Activated B cell treated with CpG ODN at 0.5 μM for 24 hours (primary cell): ENCODE measurements at regions of chr10 and their contacts with region 1.

Region 1: GRCh38 chr10:101353692-101354327 is at the start of gene BTRC:
- DNase-seq: peak; percentile 89
- ATAC-seq: peak; percentile 96
- H3K4me3 Mint-ChIP-seq: peak within 1 kb of the TSS; percentile 99
- H3K27ac Mint-ChIP-seq: peak within 1 kb of the TSS; percentile 90
- H3K4me1 Mint-ChIP-seq: peaks cover 24% of the 10 kb centered on the region
- H3K27me3 Mint-ChIP-seq: peaks cover 18% of the 10 kb centered on the region
- CTCF ChIP-seq: no peak
- total RNA-seq, gene BTRC: 11.8 and 19.4 TPM in 2 replicates

Region 2: GRCh38 chr10:100535715-100536353 is 818.0 kb before region 1 on chr10 and contains the start of gene HIF1AN:
- CTCF ChIA-PET with region 1: no interaction called
- POLR2A ChIA-PET with region 1: no interaction called
- intact Hi-C with region 1: loop called (anchors 5 kb)
- DNase-seq: peak; percentile 79
- ATAC-seq: peak; percentile 100
- H3K4me3 Mint-ChIP-seq: no peak within 1 kb of the TSS
- H3K27ac Mint-ChIP-seq: no peak within 1 kb of the TSS
- H3K4me1 Mint-ChIP-seq: peaks cover 14% of the 10 kb centered on the region
- H3K27me3 Mint-ChIP-seq: no peaks in the 10 kb centered on the region
- CTCF ChIP-seq: peak; percentile 3
- total RNA-seq, gene HIF1AN: 55.8 and 59.9 TPM in 2 replicates

Region 3: DNA sequence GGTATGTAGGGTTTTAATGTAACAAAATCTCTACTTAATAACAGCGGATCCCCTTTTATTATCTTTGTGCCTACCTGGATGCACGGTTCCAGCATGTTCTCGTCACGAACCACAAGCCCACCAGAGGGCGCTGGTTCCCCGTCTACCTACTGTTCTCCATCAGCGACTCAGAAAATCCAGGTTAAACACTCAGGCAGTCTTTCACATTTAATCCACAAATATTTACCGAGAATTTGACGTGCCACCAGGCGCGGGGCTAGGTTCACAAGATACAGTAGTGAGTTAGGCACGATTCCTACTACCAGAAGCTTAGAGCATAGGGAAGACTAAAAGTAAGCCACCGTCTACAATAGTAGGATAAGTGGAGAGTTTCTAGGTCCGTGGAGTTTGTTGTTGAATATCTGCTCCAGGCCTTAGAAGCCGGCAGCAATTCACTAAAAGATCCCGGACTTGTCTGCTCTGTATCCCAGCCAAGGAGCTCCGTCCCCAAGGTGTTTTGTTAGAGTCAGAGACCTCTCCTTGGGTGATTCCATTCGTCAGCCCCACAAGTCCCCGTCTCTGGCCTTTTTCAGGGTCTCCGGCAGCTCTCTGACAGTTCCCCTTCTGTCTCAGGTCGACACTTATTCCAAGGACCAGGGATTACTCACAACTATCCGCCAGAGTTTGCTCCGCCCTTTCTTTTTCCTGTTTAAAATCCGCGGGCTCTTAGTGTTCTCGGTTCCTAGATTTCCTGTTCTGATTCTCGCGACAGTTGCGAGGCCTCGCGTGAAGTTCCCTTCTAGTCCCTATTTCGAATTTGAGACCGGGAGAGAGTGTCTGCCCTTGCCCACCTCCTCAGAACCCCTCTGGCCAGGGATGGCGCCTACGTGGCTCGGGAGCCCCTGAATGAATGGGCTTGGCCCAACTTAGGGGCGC is 293.5 kb before region 1 on chr10:
- CTCF ChIA-PET with region 1: no interaction called
- POLR2A ChIA-PET with region 1: no interaction called
- intact Hi-C with region 1: loop called (anchors 5 kb)
- DNase-seq: peak; percentile 79
- ATAC-seq: peak; percentile 65
- H3K4me3 Mint-ChIP-seq: peak overlapping the region; percentile 98
- H3K27ac Mint-ChIP-seq: peak overlapping the region; percentile 95
- H3K4me1 Mint-ChIP-seq: peaks cover 34% of the 10 kb centered on the region
- H3K27me3 Mint-ChIP-seq: peaks cover 6% of the 10 kb centered on the region
- CTCF ChIP-seq: peak; percentile 62

Region 4: DNA sequence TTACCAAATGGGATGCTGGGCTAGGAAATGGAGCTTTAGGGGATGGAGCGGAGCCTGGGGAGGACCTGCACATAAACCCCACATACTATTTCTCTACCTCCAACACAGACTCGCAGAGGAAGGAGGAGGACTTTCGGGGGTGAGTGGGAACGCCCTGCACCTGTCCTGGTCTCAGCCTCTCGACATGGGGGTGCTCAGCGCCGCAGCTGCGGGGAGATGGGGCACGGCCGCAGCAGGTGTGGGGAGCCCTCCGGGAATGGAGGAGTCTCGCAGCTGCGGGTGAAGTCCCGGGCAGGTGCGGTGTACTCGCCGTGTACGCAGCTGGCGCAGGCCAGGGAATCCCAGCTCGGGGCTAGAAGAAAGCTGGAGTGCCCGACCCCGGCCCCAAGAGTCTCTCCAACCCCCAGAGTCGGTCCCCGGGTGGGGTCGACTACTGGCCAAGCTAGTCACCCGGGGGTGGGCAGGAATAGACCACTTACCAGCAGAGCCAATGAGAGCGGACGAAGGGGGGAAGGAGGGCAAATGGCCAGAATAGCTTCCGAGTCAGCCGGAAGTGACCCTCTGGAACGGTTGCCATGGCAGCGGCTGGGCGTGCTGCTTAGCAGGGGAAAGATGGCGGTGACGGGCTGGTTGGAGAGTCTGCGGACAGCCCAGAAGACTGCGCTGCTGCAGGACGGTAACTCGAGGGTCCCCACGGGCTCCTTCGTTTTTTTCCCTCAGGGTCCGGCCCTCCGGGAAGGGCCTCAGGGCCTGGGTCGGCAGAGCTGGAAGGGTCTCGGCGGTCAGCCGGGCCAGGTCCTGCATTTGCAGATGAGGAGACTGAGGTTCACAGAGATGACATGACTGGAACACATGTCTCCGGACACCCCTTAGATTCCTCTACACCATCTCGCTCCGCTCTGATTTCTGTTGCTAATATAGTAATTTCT is 234.2 kb after region 1 on chr10 and contains the starts of genes DPCD and POLL:
- CTCF ChIA-PET with region 1: no interaction called
- POLR2A ChIA-PET with region 1: no interaction called
- intact Hi-C with region 1: loop called (anchors 5 kb)
- DNase-seq: peak; percentile 83
- ATAC-seq: peak; percentile 97
- H3K4me3 Mint-ChIP-seq: peak within 1 kb of the TSS; percentile 92
- H3K27ac Mint-ChIP-seq: peak within 1 kb of the TSS; percentile 80
- H3K4me1 Mint-ChIP-seq: peaks cover 19% of the 10 kb centered on the region
- H3K27me3 Mint-ChIP-seq: no peaks in the 10 kb centered on the region
- CTCF ChIP-seq: no peak
- total RNA-seq, gene DPCD: 2.3 and 2.9 TPM in 2 replicates
- total RNA-seq, gene POLL: 35.0 and 39.5 TPM in 2 replicates

Region 5: DNA sequence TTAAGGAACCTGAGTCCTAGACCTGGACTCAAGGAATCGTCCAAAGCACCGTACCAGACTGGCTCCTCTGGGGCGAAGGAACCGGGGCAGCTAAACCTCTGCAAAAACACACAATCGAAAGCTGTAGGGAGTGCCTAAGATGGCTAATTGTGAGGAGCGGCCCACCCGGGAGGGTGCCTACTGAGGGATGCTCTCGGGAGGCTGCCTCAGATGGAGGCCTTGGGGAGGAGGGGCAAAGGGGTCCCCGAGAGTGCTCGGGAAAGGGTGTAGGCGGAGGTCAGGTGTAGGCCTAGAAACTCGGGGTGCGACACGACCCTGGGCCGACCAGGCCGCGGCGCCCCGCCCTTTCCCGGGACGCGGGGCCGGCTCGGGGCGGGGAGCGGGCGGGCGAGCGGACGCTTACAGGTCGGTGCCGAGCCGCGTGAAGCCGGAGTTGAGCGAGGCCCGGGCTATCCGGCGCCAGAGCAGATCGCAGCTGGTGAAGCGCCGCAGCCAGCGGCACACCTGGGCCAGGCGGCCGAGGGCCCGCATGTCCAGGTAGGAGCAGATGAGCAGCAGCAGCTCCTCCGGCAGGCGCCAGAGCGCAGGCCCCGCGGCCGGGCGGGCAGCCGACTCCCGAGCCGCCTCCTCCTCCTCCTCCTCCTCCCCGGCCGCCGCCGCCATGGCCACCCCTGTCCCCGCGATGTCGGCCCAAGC is 340.3 kb after region 1 on chr10:
- CTCF ChIA-PET with region 1: no interaction called
- POLR2A ChIA-PET with region 1: no interaction called
- intact Hi-C with region 1: loop called (anchors 2 kb)
- DNase-seq: peak; percentile 76
- ATAC-seq: peak; percentile 68
- H3K4me3 Mint-ChIP-seq: peak overlapping the region; percentile 97
- H3K27ac Mint-ChIP-seq: peak overlapping the region; percentile 98
- H3K4me1 Mint-ChIP-seq: peaks cover 49% of the 10 kb centered on the region
- H3K27me3 Mint-ChIP-seq: no peaks in the 10 kb centered on the region
- CTCF ChIP-seq: no peak

Region 6: GRCh38 chr10:102743588-102744373 is 1390.0 kb after region 1 on chr10 and contains the start of gene WBP1L:
- CTCF ChIA-PET with region 1: no interaction called
- POLR2A ChIA-PET with region 1: no interaction called
- intact Hi-C with region 1: loop called (anchors 5 kb)
- DNase-seq: peak; percentile 81
- ATAC-seq: peak; percentile 98
- H3K4me3 Mint-ChIP-seq: peak within 1 kb of the TSS; percentile 93
- H3K27ac Mint-ChIP-seq: peak within 1 kb of the TSS; percentile 87
- H3K4me1 Mint-ChIP-seq: peaks cover 47% of the 10 kb centered on the region
- H3K27me3 Mint-ChIP-seq: no peaks in the 10 kb centered on the region
- CTCF ChIP-seq: no peak
- total RNA-seq, gene WBP1L: 30.5 and 30.8 TPM in 2 replicates